Prostate gland (tissue), 2 donors: ENCODE measurements at regions of chr2 and their contacts with region 1.

Region 1: GRCh38 chr2:31428001-31428418 is 13.5 kb upstream of the XDH start:
- DNase-seq: no peak
- H3K4me3 ChIP-seq: no peak overlapping the region
- H3K27ac ChIP-seq: no peak overlapping the region
- H3K4me1 ChIP-seq: no peaks in the 10 kb centered on the region
- H3K27me3 ChIP-seq: no peaks in the 10 kb centered on the region
- CTCF ChIP-seq: no peak
- POLR2A ChIP-seq: no peak

Region 2: DNA sequence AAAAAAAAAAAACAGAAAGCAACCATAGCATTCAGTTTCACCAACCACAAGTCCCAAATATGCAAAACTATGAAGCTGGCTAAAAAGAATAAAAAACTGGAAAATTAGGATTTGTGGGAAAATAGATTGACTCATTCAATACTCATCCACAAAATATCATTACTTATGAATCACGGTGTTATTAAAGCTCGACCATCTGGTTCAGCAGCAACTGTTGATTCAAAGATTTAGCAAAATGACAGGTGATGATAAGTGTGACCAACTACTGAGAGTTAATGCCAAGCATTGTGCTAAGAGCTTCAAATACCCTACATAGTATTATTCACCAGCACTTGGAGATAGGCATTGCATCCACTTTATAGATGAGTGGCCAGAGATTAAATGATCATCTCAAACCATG is 12.8 kb after region 1 on chr2:
- intact Hi-C with region 1: no loop called
- DNase-seq: no peak
- H3K4me3 ChIP-seq: no peak overlapping the region
- H3K27ac ChIP-seq: no peak overlapping the region
- H3K4me1 ChIP-seq: no peaks in the 10 kb centered on the region
- H3K27me3 ChIP-seq: no peaks in the 10 kb centered on the region
- CTCF ChIP-seq: no peak
- POLR2A ChIP-seq: no peak

Region 3: DNA sequence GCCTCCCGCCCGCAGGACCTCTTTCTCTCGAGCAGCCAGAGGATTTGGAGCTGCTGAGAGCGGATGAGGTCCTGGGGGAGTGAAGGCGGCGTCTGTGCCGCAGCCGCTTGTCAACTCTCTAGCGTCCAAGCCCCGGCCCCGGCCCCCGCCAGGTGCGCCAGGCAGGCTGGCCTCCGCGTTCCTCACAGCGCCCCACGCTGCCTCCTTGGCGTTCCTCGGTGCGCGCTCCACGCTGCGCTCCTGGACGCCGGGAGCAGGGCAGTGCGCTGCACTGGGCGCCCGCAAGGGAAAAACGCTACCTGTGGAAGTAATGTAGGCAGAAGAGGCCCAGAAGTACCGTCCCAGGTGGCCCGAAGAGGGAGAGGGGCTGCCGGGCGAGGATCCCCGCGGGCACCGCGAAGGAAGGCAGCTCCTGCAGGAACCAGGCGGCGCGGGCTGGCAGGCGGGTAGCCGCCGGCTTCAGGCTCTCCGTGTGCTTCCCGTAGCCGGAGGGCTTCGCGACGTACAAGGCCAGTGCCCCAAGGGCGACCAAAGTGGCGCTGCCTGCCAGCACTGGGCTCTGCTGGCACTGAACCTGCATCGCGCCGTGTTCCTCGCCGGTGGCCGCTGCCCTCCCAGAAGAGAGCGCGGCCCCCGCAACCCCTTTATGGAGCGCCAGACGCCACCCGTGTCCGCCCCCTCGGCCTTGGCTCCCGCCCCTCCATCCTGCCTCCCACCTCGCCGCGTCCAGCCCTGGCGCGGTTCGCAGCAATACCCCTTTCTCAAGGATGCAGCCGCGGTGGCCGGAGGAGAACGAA is 152.5 kb after region 1 on chr2 and contains the start of gene SRD5A2:
- intact Hi-C with region 1: loop called (anchors 10 kb)
- DNase-seq: no peak
- H3K4me3 ChIP-seq: peak within 1 kb of the TSS; percentile 39 to 44
- H3K27ac ChIP-seq: peak within 1 kb of the TSS; percentile 75 to 79
- H3K4me1 ChIP-seq: no peaks in the 10 kb centered on the region
- H3K27me3 ChIP-seq: peaks cover 7% of the 10 kb centered on the region
- CTCF ChIP-seq: no peak
- POLR2A ChIP-seq: no peak
- total RNA-seq, gene SRD5A2: 5.0 to 8.5 TPM